ENCODE measurements at regions of chr6 and their contacts with region 1.

Region 1: DNA sequence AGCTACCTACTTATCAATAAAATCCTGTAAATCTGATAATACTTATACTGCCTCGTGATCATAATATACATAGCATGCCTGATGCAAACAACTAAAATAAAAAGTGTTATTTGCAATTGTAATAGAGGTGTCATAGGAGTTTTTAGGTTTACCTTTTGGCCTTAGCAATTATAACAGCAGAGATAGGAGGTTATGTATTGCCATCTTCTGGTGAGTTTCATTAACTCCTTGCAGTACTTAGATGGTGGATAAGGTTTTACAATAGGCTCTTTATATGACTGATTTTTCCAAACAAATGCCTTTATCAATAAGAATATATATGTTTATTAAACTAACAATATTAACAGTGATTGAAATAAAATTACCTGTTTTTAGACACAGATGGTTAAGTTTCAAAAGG is 27.8 kb upstream of the MYCT1 start:
- DNase-seq: peak; percentile 3 to 29
- ATAC-seq: peak; percentile 64 to 82; a peak in 3 of 6 replicates
- H3K4me3 ChIP-seq: no peak overlapping the region
- H3K27ac ChIP-seq: no peak overlapping the region
- H3K4me1 ChIP-seq: no peaks in the 10 kb centered on the region
- CTCF ChIP-seq: peak; percentile 63
- EP300 ChIP-seq: no peak
- POLR2A ChIP-seq: no peak
- RAD21 ChIP-seq: peak; percentile 70 to 71

Region 2: GRCh38 chr6:152441902-152442301 is 228.0 kb before region 1 on chr6:
- CTCF ChIA-PET with region 1: no interaction called
- POLR2A ChIA-PET with region 1: no interaction called
- DNase-seq: no peak
- ATAC-seq: no peak
- H3K4me3 ChIP-seq: no peak overlapping the region
- H3K27ac ChIP-seq: no peak overlapping the region
- H3K4me1 ChIP-seq: no peaks in the 10 kb centered on the region
- CTCF ChIP-seq: no peak
- EP300 ChIP-seq: no peak
- POLR2A ChIP-seq: no peak
- RAD21 ChIP-seq: no peak

Region 3: DNA sequence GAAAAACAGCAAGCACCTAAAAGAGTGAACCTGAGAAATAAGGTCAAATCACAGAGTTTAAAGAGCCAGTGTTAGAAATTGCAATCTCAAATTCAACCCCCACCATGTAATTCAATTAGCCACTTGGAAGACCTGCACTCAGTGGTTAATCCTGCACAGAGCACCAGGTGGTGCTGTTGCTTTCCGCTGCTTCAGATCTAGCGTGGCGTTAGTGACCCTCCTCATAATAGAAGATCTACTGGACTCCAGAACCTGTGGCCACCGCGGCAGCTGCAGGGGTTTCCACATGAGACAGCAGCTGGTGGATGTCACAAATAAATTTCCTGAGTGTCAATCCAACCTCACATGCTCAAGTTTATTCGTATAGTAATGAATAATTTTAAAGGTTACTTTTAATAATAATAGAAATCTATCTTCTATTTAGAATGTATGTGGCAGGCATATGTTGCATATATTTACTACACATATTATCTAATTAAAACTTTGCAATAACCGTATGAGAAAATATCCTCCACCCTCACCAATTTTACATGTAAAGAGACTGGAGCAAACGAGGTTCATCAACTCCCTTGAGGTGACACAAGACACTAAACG is 117.2 kb before region 1 on chr6:
- CTCF ChIA-PET with region 1: interaction called, 11 read pairs
- POLR2A ChIA-PET with region 1: no interaction called
- DNase-seq: peak; percentile 31 to 65
- ATAC-seq: peak; percentile 93 to 98
- H3K4me3 ChIP-seq: no peak overlapping the region
- H3K27ac ChIP-seq: no peak overlapping the region
- H3K4me1 ChIP-seq: no peaks in the 10 kb centered on the region
- CTCF ChIP-seq: peak; percentile 68
- EP300 ChIP-seq: no peak
- POLR2A ChIP-seq: no peak
- RAD21 ChIP-seq: peak; percentile 74 to 76